B cell (primary cell): ENCODE measurements at regions of chr14 and their contacts with region 1.

Region 1: GRCh38 chr14:89303457-89304435 is 113.3 kb downstream of the FOXN3 start:
- DNase-seq: peak; percentile 90
- ATAC-seq: peak; percentile 69
- H3K4me3 ChIP-seq: peak overlapping the region; percentile 26 to 61 (median 47)
- H3K4me3 Mint-ChIP-seq: peak overlapping the region; percentile 95
- H3K27ac ChIP-seq: peak overlapping the region; percentile 93 to 99
- H3K27ac Mint-ChIP-seq: peak overlapping the region; percentile 100
- H3K4me1 ChIP-seq: peaks cover 66 to 75% of the 10 kb centered on the region in 2 donors
- H3K4me1 Mint-ChIP-seq: peaks cover 77% of the 10 kb centered on the region
- H3K27me3 ChIP-seq: no peaks in the 10 kb centered on the region
- H3K27me3 Mint-ChIP-seq: no peaks in the 10 kb centered on the region
- CTCF ChIP-seq: no peak

Region 2: GRCh38 chr14:89129570-89129969 is 174.2 kb before region 1 on chr14:
- CTCF ChIA-PET with region 1: no interaction called
- POLR2A ChIA-PET with region 1: no interaction called
- intact Hi-C with region 1: no loop called
- DNase-seq: no peak
- ATAC-seq: no peak
- H3K4me3 ChIP-seq: no peak overlapping the region
- H3K4me3 Mint-ChIP-seq: no peak overlapping the region
- H3K27ac ChIP-seq: no peak overlapping the region
- H3K27ac Mint-ChIP-seq: no peak overlapping the region
- H3K4me1 ChIP-seq: no peaks in the 10 kb centered on the region
- H3K4me1 Mint-ChIP-seq: no peaks in the 10 kb centered on the region
- H3K27me3 ChIP-seq: no peaks in the 10 kb centered on the region
- H3K27me3 Mint-ChIP-seq: peaks cover 7% of the 10 kb centered on the region
- CTCF ChIP-seq: no peak

Region 3: DNA sequence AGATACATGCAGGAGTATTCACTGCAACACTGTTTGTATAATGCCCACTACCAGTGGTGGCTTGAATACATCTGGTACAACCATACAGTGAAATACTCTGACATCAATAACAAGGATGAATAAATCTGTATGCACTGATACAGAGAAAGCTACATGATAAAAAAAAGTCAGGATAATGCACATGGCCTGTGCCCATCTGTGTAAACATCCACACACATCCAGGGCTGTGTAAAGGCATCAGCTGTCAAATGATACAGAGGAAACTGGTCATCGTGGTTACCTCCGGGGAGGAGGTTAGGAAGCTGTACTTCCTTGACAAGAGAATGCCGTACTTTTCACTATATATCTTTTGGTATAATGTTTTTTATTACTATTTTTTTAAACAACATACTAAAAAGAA is 63.3 kb before region 1 on chr14:
- CTCF ChIA-PET with region 1: interaction called, 3 read pairs
- POLR2A ChIA-PET with region 1: no interaction called
- intact Hi-C with region 1: loop called (anchors 5 kb)
- DNase-seq: no peak
- ATAC-seq: no peak
- H3K4me3 ChIP-seq: no peak overlapping the region
- H3K4me3 Mint-ChIP-seq: no peak overlapping the region
- H3K27ac ChIP-seq: no peak overlapping the region
- H3K27ac Mint-ChIP-seq: no peak overlapping the region
- H3K4me1 ChIP-seq: peaks cover 31 to 37% of the 10 kb centered on the region in 2 donors
- H3K4me1 Mint-ChIP-seq: peaks cover 59% of the 10 kb centered on the region
- H3K27me3 ChIP-seq: no peaks in the 10 kb centered on the region
- H3K27me3 Mint-ChIP-seq: no peaks in the 10 kb centered on the region
- CTCF ChIP-seq: no peak

Region 4: GRCh38 chr14:89330236-89331002 is 26.7 kb after region 1 on chr14:
- CTCF ChIA-PET with region 1: interaction called, 24 read pairs
- POLR2A ChIA-PET with region 1: no interaction called
- intact Hi-C with region 1: loop called (anchors 1 kb)
- DNase-seq: peak; percentile 8
- ATAC-seq: no peak
- H3K4me3 ChIP-seq: no peak overlapping the region
- H3K4me3 Mint-ChIP-seq: no peak overlapping the region
- H3K27ac ChIP-seq: no peak overlapping the region
- H3K27ac Mint-ChIP-seq: peak overlapping the region; percentile 51
- H3K4me1 ChIP-seq: peaks cover 31 to 39% of the 10 kb centered on the region in 2 donors
- H3K4me1 Mint-ChIP-seq: peaks cover 52% of the 10 kb centered on the region
- H3K27me3 ChIP-seq: no peaks in the 10 kb centered on the region
- H3K27me3 Mint-ChIP-seq: no peaks in the 10 kb centered on the region
- CTCF ChIP-seq: no peak

Region 5: GRCh38 chr14:89365061-89365801 is 61.5 kb after region 1 on chr14:
- CTCF ChIA-PET with region 1: interaction called, 5 read pairs
- POLR2A ChIA-PET with region 1: interaction called, 5 read pairs
- intact Hi-C with region 1: loop called (anchors 1 kb)
- DNase-seq: peak; percentile 87
- ATAC-seq: peak; percentile 93
- H3K4me3 ChIP-seq: peak overlapping the region; percentile 29 to 60 (median 51)
- H3K4me3 Mint-ChIP-seq: peak overlapping the region; percentile 84
- H3K27ac ChIP-seq: peak overlapping the region; percentile 86 to 92
- H3K27ac Mint-ChIP-seq: peak overlapping the region; percentile 90
- H3K4me1 ChIP-seq: peaks cover 43 to 52% of the 10 kb centered on the region in 2 donors
- H3K4me1 Mint-ChIP-seq: peaks cover 57% of the 10 kb centered on the region
- H3K27me3 ChIP-seq: no peaks in the 10 kb centered on the region
- H3K27me3 Mint-ChIP-seq: no peaks in the 10 kb centered on the region
- CTCF ChIP-seq: no peak

Region 6: GRCh38 chr14:89618811-89619551 is 315.2 kb after region 1 on chr14:
- CTCF ChIA-PET with region 1: no interaction called
- POLR2A ChIA-PET with region 1: no interaction called
- intact Hi-C with region 1: loop called (anchors 2 kb)
- DNase-seq: peak; percentile 81
- ATAC-seq: peak; percentile 72
- H3K4me3 ChIP-seq: peak overlapping the region; percentile 61 to 93 (median 86)
- H3K4me3 Mint-ChIP-seq: peak overlapping the region; percentile 92
- H3K27ac ChIP-seq: peak overlapping the region in 1 of 2 donors; percentile 71
- H3K27ac Mint-ChIP-seq: peak overlapping the region; percentile 86
- H3K4me1 ChIP-seq: peaks cover 51 to 55% of the 10 kb centered on the region in 2 donors
- H3K4me1 Mint-ChIP-seq: peaks cover 66% of the 10 kb centered on the region
- H3K27me3 ChIP-seq: no peaks in the 10 kb centered on the region
- H3K27me3 Mint-ChIP-seq: no peaks in the 10 kb centered on the region
- CTCF ChIP-seq: no peak

Region 7: GRCh38 chr14:90383075-90383730 is 1079.5 kb after region 1 on chr14:
- CTCF ChIA-PET with region 1: no interaction called
- POLR2A ChIA-PET with region 1: no interaction called
- intact Hi-C with region 1: loop called (anchors 10 kb)
- DNase-seq: peak; percentile 99
- ATAC-seq: peak; percentile 91
- H3K4me3 ChIP-seq: peak overlapping the region; percentile 60 to 97 (median 92)
- H3K4me3 Mint-ChIP-seq: no peak overlapping the region
- H3K27ac ChIP-seq: peak overlapping the region; percentile 93 to 98
- H3K27ac Mint-ChIP-seq: no peak overlapping the region
- H3K4me1 ChIP-seq: peaks cover 15 to 24% of the 10 kb centered on the region in 2 donors
- H3K4me1 Mint-ChIP-seq: peaks cover 12% of the 10 kb centered on the region
- H3K27me3 ChIP-seq: no peaks in the 10 kb centered on the region
- H3K27me3 Mint-ChIP-seq: no peaks in the 10 kb centered on the region
- CTCF ChIP-seq: no peak